Left colon (tissue), 2 donors: ENCODE measurements at regions of chr6 and their contacts with region 1.

Region 1: GRCh38 chr6:127464881-127465459 is 5.8 kb upstream of the KIAA0408 start:
- DNase-seq: peak; percentile 64 to 68
- ATAC-seq: peak; percentile 80

Region 2: DNA sequence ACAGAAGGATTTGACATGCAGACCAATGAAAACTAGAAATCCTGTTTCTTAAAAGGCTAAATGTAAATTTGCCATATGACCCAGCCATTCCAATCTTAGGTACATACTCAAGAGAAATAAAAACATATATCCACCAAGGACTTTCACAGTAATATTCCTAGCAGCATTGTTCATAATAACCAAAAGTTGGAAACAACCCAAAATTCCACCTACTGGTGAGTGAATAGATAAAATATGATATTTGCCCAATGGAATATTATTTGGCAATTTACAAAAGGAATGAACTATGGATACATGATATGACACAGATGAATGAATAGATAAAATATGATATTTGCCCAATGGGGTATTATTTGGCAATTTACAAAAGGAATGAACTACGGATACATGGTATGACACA is 31.5 kb after region 1 on chr6:
- intact Hi-C with region 1: no loop called
- DNase-seq: no peak
- ATAC-seq: no peak

Region 3: DNA sequence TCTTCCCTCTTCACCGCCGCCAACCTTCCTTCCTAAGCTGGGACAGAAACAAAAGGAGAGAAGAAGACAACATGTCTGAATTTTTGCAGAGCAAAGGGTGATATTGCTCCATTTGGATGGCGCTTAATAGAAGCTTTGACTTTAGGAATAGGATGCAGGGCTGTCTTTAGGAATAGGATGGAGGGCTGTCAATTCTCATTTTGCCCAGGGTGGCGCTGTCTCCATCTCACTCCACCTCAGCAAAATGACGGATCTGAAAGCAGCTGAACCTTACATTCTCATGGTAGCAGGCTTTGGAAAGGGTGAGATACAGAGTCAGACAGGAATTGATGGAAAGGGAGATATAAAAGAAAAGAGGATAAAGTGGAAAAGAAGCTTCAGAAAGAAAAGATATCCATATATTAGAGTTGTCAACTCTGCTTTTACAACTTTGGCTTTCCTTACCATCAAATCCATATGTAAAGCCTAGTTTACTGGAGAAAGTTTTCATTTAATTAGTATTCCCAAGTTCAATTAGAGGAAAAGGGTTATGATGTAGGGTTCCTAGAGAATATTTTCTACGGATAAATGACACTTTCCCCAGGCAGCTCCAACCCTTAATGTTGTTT is 51.8 kb after region 1 on chr6:
- intact Hi-C with region 1: loop called in 1 of 2 experiments (anchors 5 kb)
- DNase-seq: peak in 1 of 2 donors; percentile 28
- ATAC-seq: peak; percentile 62

Region 4: DNA sequence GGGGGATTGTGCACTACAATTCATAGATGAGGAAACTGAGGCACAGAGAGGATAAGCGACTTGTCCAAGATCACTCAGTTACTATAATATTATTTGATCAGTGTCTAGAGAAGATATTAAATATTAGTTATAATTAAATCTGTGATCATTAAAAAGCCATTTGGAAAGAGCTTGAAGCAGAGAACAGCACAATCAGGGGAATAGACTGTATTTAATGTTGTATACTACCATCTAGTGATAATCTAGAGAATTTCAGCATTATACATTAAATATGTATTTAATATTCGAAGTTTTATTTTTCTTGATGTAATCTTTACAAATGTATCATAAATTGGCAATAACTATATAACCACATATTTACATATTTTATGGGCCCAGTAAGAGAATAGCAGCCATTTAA is 74.3 kb after region 1 on chr6:
- intact Hi-C with region 1: loop called in 1 of 2 experiments (anchors 5 kb)
- DNase-seq: no peak
- ATAC-seq: no peak